ENCODE measurements at regions of chr16 and their contacts with region 1.

Region 1: DNA sequence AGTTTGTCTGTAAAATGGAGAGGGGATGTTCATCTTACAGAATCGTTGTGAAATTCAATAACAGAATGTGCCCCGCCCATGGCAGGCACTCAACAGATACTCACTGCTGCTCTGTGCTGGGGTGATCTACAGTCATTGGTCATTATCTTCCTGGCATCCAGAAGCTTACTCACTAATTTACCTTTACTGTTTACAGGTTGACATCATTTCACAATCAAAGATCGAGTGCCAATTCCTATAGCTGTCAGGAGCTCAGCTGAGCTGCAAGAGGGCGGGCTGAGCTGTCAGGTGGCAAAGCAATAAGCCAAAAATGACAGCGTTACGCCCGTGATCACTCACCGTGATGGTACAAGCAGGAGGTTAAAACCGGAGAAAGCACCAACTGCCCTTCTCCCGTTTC is 51.2 kb downstream of the LITAF start:
- DNase-seq: no peak
- H3K4me3 ChIP-seq: no peak overlapping the region
- H3K4me3 Mint-ChIP-seq: peak overlapping the region in 1 of 7 donors; percentile 36
- H3K27ac ChIP-seq: no peak overlapping the region
- H3K27ac Mint-ChIP-seq: peak overlapping the region in 3 of 8 donors; percentile 26 to 90 (median 47)
- H3K4me1 ChIP-seq: peaks cover 3% of the 10 kb centered on the region
- H3K4me1 Mint-ChIP-seq: peaks cover 22 to 44% (median 26%) of the 10 kb centered on the region in 3 donors
- H3K27me3 ChIP-seq: no peaks in the 10 kb centered on the region
- H3K27me3 Mint-ChIP-seq: peaks cover 0 to 3% of the 10 kb centered on the region in 2 donors

Region 2: DNA sequence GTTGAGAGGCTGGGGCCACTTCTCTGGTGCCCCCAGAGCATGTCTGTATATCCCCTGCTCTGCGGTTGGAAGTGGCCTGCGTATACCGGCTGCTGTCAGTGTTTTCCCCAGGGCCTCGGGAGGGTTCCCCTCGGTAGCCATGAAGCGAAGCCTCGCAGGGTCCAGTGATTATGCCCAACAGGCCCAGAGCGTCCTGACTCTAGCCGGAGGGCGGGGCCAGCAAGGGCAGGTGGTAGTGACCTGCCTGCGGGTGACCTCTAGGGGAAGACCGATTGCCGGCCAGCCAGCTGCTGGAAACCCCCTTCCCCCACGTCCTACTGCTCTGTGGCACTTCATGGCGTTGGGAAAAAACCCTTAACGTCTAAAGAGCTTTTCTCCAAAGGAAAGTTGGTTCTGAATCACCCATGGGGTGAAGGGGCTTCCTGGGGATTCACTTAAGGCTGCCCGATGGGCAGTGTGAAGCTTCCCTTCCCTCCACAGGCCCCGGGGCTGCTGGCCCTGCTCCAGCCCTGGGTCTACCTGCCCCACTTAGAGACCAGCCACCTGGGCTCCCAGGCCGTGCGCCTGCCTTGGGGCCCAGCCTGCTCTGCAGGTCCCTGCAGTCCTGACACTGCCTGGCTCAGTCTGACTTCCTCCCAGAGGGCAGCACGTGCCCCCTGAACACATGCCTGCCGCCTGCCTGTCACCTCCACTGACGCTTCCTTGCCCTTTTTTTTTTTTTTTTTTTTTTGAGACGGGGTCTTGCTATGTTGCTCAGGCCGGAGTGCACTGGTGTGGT is 352.2 kb before region 1 on chr16:
- CTCF ChIA-PET with region 1: no interaction called
- POLR2A ChIA-PET with region 1: no interaction called
- DNase-seq: no peak
- H3K4me3 ChIP-seq: no peak overlapping the region
- H3K4me3 Mint-ChIP-seq: no peak overlapping the region
- H3K27ac ChIP-seq: no peak overlapping the region
- H3K27ac Mint-ChIP-seq: no peak overlapping the region
- H3K4me1 ChIP-seq: no peaks in the 10 kb centered on the region
- H3K4me1 Mint-ChIP-seq: no peaks in the 10 kb centered on the region
- H3K27me3 ChIP-seq: no peaks in the 10 kb centered on the region
- H3K27me3 Mint-ChIP-seq: no peaks in the 10 kb centered on the region

Region 3: GRCh38 chr16:11560701-11561449 is 25.4 kb after region 1 on chr16:
- CTCF ChIA-PET with region 1: interaction called, 14 read pairs
- POLR2A ChIA-PET with region 1: no interaction called
- DNase-seq: peak; percentile 61 to 91 (median 86)
- H3K4me3 ChIP-seq: peak overlapping the region; percentile 62
- H3K4me3 Mint-ChIP-seq: peak overlapping the region; percentile 79 to 98 (median 89)
- H3K27ac ChIP-seq: peak overlapping the region; percentile 83
- H3K27ac Mint-ChIP-seq: peak overlapping the region; percentile 86 to 100 (median 99)
- H3K4me1 ChIP-seq: peaks cover 85% of the 10 kb centered on the region
- H3K4me1 Mint-ChIP-seq: peaks cover 74 to 93% (median 89%) of the 10 kb centered on the region in 3 donors
- H3K27me3 ChIP-seq: no peaks in the 10 kb centered on the region
- H3K27me3 Mint-ChIP-seq: peaks cover 0 to 8% of the 10 kb centered on the region in 2 donors

Region 4: DNA sequence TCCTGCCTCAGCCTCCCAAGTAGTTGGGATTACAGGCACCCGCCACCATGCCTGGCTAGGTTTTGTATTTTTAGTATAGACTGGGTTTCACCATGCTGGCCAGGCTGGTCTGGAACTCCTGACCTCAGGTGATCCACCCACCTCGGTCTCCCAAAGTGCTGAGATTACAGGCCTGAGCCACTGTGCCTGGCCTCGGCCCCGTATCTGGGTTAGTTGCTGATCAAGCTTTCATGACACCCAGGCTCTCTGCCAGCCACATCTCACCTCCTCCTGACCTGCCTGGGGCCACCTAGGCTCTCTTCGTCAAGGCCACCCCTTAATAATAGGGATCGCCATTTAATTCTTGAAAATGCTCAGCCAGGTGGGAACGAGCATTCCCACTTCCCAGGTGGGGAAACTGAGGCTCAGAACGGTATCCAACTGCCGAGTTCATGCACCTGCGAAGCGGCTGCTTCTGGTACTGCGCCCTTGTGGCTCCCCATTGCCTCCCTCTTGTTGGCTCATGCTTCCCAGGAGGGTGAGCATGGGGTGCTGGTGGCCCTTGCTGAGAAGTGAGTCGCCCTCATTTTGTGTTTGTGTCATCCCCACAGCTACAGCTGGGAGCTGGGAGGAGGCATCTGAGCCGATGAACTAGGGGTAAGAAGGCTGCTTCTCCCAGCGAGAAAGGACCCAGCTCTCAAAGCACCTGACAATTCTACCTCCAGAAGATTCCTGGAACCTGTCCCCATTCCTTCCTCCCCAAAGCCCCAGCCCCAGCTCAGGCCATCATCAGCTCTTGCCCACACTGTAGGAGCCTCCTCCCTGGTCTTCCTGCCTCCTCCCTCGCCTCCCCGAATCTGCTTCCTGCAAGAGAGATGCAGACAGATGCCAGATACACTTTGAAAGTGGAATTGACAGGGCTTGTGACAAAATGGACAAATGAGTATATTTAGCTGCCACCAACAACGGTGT is 115.4 kb after region 1 on chr16:
- CTCF ChIA-PET with region 1: interaction called, 10 read pairs
- POLR2A ChIA-PET with region 1: no interaction called
- DNase-seq: no peak
- H3K4me3 ChIP-seq: no peak overlapping the region
- H3K4me3 Mint-ChIP-seq: no peak overlapping the region
- H3K27ac ChIP-seq: no peak overlapping the region
- H3K27ac Mint-ChIP-seq: no peak overlapping the region
- H3K4me1 ChIP-seq: peaks cover 12% of the 10 kb centered on the region
- H3K4me1 Mint-ChIP-seq: peaks cover 9 to 14% (median 11%) of the 10 kb centered on the region in 3 donors
- H3K27me3 ChIP-seq: no peaks in the 10 kb centered on the region
- H3K27me3 Mint-ChIP-seq: peaks cover 0 to 3% of the 10 kb centered on the region in 2 donors

Region 5: GRCh38 chr16:11715246-11715947 is 179.9 kb after region 1 on chr16:
- CTCF ChIA-PET with region 1: interaction called, 46 read pairs
- POLR2A ChIA-PET with region 1: no interaction called
- DNase-seq: no peak
- H3K4me3 ChIP-seq: no peak overlapping the region
- H3K4me3 Mint-ChIP-seq: no peak overlapping the region
- H3K27ac ChIP-seq: no peak overlapping the region
- H3K27ac Mint-ChIP-seq: peak overlapping the region in 2 of 8 donors; percentile 4 to 84
- H3K4me1 ChIP-seq: no peaks in the 10 kb centered on the region
- H3K4me1 Mint-ChIP-seq: peaks cover 11 to 31% (median 29%) of the 10 kb centered on the region in 3 donors
- H3K27me3 ChIP-seq: no peaks in the 10 kb centered on the region
- H3K27me3 Mint-ChIP-seq: peaks cover 0 to 2% of the 10 kb centered on the region in 2 donors